ENCODE measurements at regions of chr22 and their contacts with region 1.

Region 1: GRCh38 chr22:27094633-27095308 is 437.4 kb downstream of the MIAT start:
- DNase-seq: no peak
- ATAC-seq: no peak
- H3K4me3 ChIP-seq: no peak overlapping the region
- H3K4me3 Mint-ChIP-seq: no peak overlapping the region
- H3K27ac ChIP-seq: no peak overlapping the region
- H3K27ac Mint-ChIP-seq: no peak overlapping the region
- H3K4me1 ChIP-seq: no peaks in the 10 kb centered on the region
- H3K4me1 Mint-ChIP-seq: no peaks in the 10 kb centered on the region
- H3K27me3 ChIP-seq: peaks cover 8 to 21% of the 10 kb centered on the region in 2 experiments
- H3K27me3 Mint-ChIP-seq: peaks cover 35% of the 10 kb centered on the region
- CTCF ChIP-seq: no peak

Region 2: GRCh38 chr22:27019827-27020226 is 74.9 kb before region 1 on chr22:
- CTCF ChIA-PET with region 1: no interaction called
- POLR2A ChIA-PET with region 1: no interaction called
- intact Hi-C with region 1: loop called in 1 of 2 experiments (anchors 10 kb)
- DNase-seq: no peak
- ATAC-seq: no peak
- H3K4me3 ChIP-seq: no peak overlapping the region
- H3K4me3 Mint-ChIP-seq: no peak overlapping the region
- H3K27ac ChIP-seq: no peak overlapping the region
- H3K27ac Mint-ChIP-seq: no peak overlapping the region
- H3K4me1 ChIP-seq: no peaks in the 10 kb centered on the region
- H3K4me1 Mint-ChIP-seq: no peaks in the 10 kb centered on the region
- H3K27me3 ChIP-seq: peaks cover 6 to 12% of the 10 kb centered on the region in 2 experiments
- H3K27me3 Mint-ChIP-seq: peaks cover 24% of the 10 kb centered on the region
- CTCF ChIP-seq: no peak

Region 3: GRCh38 chr22:27075028-27075678 is 19.6 kb before region 1 on chr22:
- CTCF ChIA-PET with region 1: no interaction called
- POLR2A ChIA-PET with region 1: no interaction called
- intact Hi-C with region 1: loop called in 1 of 2 experiments (anchors 1 kb)
- DNase-seq: no peak
- ATAC-seq: no peak
- H3K4me3 ChIP-seq: no peak overlapping the region
- H3K4me3 Mint-ChIP-seq: no peak overlapping the region
- H3K27ac ChIP-seq: no peak overlapping the region
- H3K27ac Mint-ChIP-seq: no peak overlapping the region
- H3K4me1 ChIP-seq: no peaks in the 10 kb centered on the region
- H3K4me1 Mint-ChIP-seq: no peaks in the 10 kb centered on the region
- H3K27me3 ChIP-seq: peaks cover 3 to 10% of the 10 kb centered on the region in 2 experiments
- H3K27me3 Mint-ChIP-seq: peaks cover 21% of the 10 kb centered on the region
- CTCF ChIP-seq: no peak

Measured in CD4-positive, alpha-beta T cell (primary cell).